GM12878 (cell line): ENCODE measurements at regions of chr7 and their contacts with region 1.

Region 1: DNA sequence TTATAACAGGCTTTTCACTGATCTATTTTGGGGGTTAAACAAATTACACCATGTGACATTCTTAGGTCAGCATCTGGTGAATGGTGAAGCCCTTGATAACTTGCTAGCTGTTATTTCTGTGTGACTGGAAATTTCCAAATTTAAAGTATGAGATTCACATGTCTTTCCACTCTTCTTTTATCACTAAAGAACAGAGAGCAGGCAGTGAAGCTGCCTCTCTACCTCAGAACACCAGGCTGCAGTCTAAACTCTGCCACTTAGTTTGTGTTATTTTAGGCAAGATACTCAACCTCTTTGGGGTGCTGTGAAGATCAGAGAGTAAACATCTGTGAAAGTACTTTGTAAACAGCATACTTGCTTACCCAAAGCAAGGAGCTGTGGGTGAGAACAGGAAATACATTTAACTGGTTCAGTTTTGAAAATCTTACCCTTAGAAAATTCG is 15.5 kb upstream of the SP4 start:
- DNase-seq: peak; percentile 43
- ATAC-seq: peak; percentile 79
- H3K4me3 ChIP-seq: no peak overlapping the region
- H3K27ac ChIP-seq: peak overlapping the region; percentile 70
- H3K4me1 ChIP-seq: peaks cover 11% of the 10 kb centered on the region
- H3K27me3 ChIP-seq: no peaks in the 10 kb centered on the region
- CTCF ChIP-seq: no peak
- EP300 ChIP-seq: no peak
- POLR2A ChIP-seq: no peak
- RAD21 ChIP-seq: 0 out of 2 replicates have a peak, but pooled peaks have one; percentile 1

Region 2: GRCh38 chr7:21345361-21345760 is 67.1 kb before region 1 on chr7:
- CTCF ChIA-PET with region 1: interaction called, 6 read pairs
- POLR2A ChIA-PET with region 1: interaction called, 3 read pairs
- RAD21 ChIA-PET with region 1: interaction called, 11 read pairs
- SMC1A ChIA-PET with region 1: interaction called, 5 read pairs
- in situ Hi-C with region 1: no loop called
- intact Hi-C with region 1: no loop called
- DNase-seq: peak; percentile 87
- ATAC-seq: peak; percentile 77
- H3K4me3 ChIP-seq: no peak overlapping the region
- H3K27ac ChIP-seq: peak overlapping the region; percentile 83
- H3K4me1 ChIP-seq: peaks cover 27% of the 10 kb centered on the region
- H3K27me3 ChIP-seq: no peaks in the 10 kb centered on the region
- CTCF ChIP-seq: no peak
- EP300 ChIP-seq: no peak
- POLR2A ChIP-seq: no peak
- RAD21 ChIP-seq: peak; percentile 23; the same call in 1 of the 2 replicates

Region 3: DNA sequence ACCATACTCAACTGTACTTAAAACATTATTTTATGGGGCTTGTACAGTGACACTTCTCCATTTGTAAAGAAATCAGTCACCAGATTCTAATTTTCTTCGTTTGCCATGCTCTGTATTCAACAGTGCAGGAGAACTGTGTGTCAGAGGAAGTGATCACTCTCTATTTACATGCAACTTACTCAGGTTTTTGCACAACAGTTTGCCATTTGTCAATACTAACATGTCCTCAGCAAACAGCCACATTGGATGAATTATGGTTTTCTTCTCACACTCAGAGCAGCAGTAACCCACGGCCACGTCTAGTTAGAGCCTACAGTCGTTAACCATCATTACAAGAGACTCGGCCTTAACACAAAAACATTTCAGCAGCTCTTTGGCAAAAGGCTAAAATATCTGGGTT is 53.8 kb before region 1 on chr7:
- CTCF ChIA-PET with region 1: interaction called, 4 read pairs
- POLR2A ChIA-PET with region 1: interaction called, 11 read pairs
- RAD21 ChIA-PET with region 1: interaction called, 35 read pairs
- SMC1A ChIA-PET with region 1: interaction called, 34 read pairs
- in situ Hi-C with region 1: no loop called
- intact Hi-C with region 1: no loop called
- DNase-seq: no peak
- ATAC-seq: no peak
- H3K4me3 ChIP-seq: no peak overlapping the region
- H3K27ac ChIP-seq: no peak overlapping the region; the same call in 1 of the 2 replicates
- H3K4me1 ChIP-seq: peaks cover 38% of the 10 kb centered on the region
- H3K27me3 ChIP-seq: no peaks in the 10 kb centered on the region
- CTCF ChIP-seq: no peak
- EP300 ChIP-seq: no peak
- POLR2A ChIP-seq: no peak
- RAD21 ChIP-seq: no peak

Region 4: DNA sequence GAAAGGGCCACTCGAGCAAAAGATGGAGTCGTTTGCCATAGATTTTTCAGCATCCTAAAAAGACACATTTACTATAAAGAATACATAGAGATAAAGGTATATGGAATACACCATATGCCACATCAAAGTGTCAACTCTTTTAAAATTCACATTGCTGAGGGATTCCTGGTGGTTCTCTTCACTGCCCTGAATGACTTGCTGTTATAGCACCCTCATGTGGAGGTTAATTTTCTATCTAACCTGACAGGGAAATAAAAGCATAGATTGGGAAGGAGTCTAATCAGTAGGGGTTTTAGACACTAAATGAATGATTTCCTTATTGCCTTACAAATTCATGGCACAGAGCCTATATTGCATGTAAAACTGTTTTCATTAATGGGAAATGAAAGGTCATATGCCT is 156.3 kb after region 1 on chr7:
- CTCF ChIA-PET with region 1: interaction called, 4 read pairs
- POLR2A ChIA-PET with region 1: no interaction called
- RAD21 ChIA-PET with region 1: interaction called, 11 read pairs
- SMC1A ChIA-PET with region 1: interaction called, 5 read pairs
- in situ Hi-C with region 1: no loop called
- intact Hi-C with region 1: no loop called
- DNase-seq: no peak
- ATAC-seq: peak; percentile 80
- H3K4me3 ChIP-seq: no peak overlapping the region
- H3K27ac ChIP-seq: no peak overlapping the region
- H3K4me1 ChIP-seq: no peaks in the 10 kb centered on the region
- H3K27me3 ChIP-seq: no peaks in the 10 kb centered on the region
- CTCF ChIP-seq: peak; percentile 27 to 56 (median 30); a peak in 4 of 6 replicates
- EP300 ChIP-seq: no peak
- POLR2A ChIP-seq: no peak
- RAD21 ChIP-seq: peak; percentile 82